MCF 10A (cell line): ENCODE measurements at regions of chr6 and their contacts with region 1.

Region 1: DNA sequence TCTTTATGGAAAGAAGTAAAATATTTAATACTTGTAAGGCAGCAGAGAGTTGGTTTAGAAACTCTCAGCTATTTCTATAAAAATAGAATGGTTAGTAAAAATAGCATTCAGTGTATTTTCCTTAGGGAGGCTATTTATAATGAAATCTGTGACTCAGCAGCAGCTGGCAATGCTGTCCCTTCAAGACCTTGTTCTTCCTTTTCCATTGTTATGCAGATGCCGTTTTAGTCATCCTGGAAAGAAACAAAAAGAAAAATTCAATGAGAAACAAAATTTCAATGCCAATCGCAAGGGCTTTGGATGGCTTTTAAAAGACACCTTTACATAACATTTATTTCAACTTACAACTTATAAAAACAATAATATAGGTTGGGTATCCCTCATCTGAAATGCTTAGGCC is 17.5 kb downstream of the MPC1 start:
- DNase-seq: no peak
- H3K4me3 Mint-ChIP-seq: no peak overlapping the region
- H3K27ac Mint-ChIP-seq: no peak overlapping the region
- H3K4me1 Mint-ChIP-seq: peaks cover 10% of the 10 kb centered on the region
- H3K27me3 Mint-ChIP-seq: no peaks in the 10 kb centered on the region
- CTCF ChIP-seq: no peak

Region 2: GRCh38 chr6:165031502-165031901 is 1333.7 kb before region 1 on chr6:
- CTCF ChIA-PET with region 1: no interaction called
- POLR2A ChIA-PET with region 1: no interaction called
- intact Hi-C with region 1: no loop called
- DNase-seq: no peak
- H3K4me3 Mint-ChIP-seq: no peak overlapping the region
- H3K27ac Mint-ChIP-seq: no peak overlapping the region
- H3K4me1 Mint-ChIP-seq: peaks cover 18% of the 10 kb centered on the region
- H3K27me3 Mint-ChIP-seq: no peaks in the 10 kb centered on the region
- CTCF ChIP-seq: no peak

Region 3: DNA sequence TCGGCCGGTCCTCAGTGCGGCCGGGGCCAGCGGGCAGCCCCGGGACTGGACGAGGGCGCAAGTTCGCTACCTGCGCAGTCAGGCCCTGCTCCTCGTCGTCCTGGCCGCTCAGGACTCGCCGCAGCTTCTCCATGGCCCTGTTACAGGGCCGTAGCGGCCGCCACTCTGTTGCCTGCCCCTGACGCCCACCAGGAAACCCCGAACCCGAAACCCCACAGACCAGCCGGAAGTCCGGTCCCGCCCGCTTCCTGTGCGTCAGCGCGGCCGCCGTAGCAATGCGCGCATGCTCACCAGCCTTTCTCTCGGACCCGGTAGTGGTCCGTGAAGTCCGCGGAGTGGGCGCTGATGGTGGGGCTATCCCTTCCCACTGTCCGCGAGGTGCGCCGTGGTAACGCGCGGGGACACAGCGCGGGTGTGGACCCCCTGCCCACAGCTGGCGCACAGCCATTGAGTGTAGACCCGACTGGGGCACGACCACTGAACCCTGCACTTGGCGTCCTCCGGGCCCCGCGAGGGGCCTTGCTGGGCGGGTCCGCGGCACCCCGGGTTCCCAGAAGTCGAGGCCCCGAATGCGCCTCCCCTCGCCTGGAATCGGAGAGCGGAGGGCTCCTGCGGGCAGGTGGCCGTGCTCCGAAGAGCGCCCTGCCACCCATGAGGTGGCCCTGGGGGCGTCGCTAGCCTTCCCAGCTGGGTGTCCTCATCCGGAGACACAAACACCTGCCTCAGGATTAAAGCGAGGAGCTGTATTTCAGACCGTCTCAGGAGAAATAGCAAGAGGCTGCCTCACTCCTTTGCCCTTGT is 22.7 kb before region 1 on chr6 and contains the start of gene SFT2D1:
- CTCF ChIA-PET with region 1: interaction called, 3 read pairs
- POLR2A ChIA-PET with region 1: interaction called, 28 read pairs
- intact Hi-C with region 1: no loop called
- DNase-seq: peak; percentile 75
- H3K4me3 Mint-ChIP-seq: peak within 1 kb of the TSS; percentile 87
- H3K27ac Mint-ChIP-seq: peak within 1 kb of the TSS; percentile 89
- H3K4me1 Mint-ChIP-seq: peaks cover 6% of the 10 kb centered on the region
- H3K27me3 Mint-ChIP-seq: no peaks in the 10 kb centered on the region
- CTCF ChIP-seq: no peak
- total RNA-seq, gene SFT2D1: 39.5 and 43.3 TPM in 2 replicates